A673 (cell line): ENCODE measurements at regions of chr7 and their contacts with region 1.

Region 1: GRCh38 chr7:33357863-33358262 is 228.5 kb downstream of the BBS9 start:
- DNase-seq: no peak
- H3K4me3 ChIP-seq: no peak overlapping the region
- H3K27ac ChIP-seq: no peak overlapping the region
- H3K4me1 ChIP-seq: no peaks in the 10 kb centered on the region
- H3K27me3 ChIP-seq: no peaks in the 10 kb centered on the region
- CTCF ChIP-seq: no peak

Region 2: GRCh38 chr7:33392148-33392547 is 34.3 kb after region 1 on chr7:
- CTCF ChIA-PET with region 1: no interaction called
- POLR2A ChIA-PET with region 1: no interaction called
- intact Hi-C with region 1: loop called (anchors 2 kb)
- DNase-seq: no peak
- H3K4me3 ChIP-seq: no peak overlapping the region
- H3K27ac ChIP-seq: no peak overlapping the region
- H3K4me1 ChIP-seq: no peaks in the 10 kb centered on the region
- H3K27me3 ChIP-seq: no peaks in the 10 kb centered on the region
- CTCF ChIP-seq: no peak